ENCODE measurements at regions of chr1 and their contacts with region 1.

Region 1: GRCh38 chr1:220485131-220485530 is 42.8 kb upstream of the MARK1 start:
- DNase-seq: peak in 1 of 2 experiments; percentile 34
- H3K4me3 ChIP-seq: no peak overlapping the region
- H3K4me3 Mint-ChIP-seq: no peak overlapping the region
- H3K27ac Mint-ChIP-seq: no peak overlapping the region
- H3K4me1 ChIP-seq: peaks cover 5% of the 10 kb centered on the region; the same call in 1 of the 2 replicates
- H3K4me1 Mint-ChIP-seq: peaks cover 21% of the 10 kb centered on the region
- H3K27me3 ChIP-seq: no peaks in the 10 kb centered on the region
- H3K27me3 Mint-ChIP-seq: peaks cover 5% of the 10 kb centered on the region
- CTCF ChIP-seq: peak; percentile 11 to 60

Region 2: DNA sequence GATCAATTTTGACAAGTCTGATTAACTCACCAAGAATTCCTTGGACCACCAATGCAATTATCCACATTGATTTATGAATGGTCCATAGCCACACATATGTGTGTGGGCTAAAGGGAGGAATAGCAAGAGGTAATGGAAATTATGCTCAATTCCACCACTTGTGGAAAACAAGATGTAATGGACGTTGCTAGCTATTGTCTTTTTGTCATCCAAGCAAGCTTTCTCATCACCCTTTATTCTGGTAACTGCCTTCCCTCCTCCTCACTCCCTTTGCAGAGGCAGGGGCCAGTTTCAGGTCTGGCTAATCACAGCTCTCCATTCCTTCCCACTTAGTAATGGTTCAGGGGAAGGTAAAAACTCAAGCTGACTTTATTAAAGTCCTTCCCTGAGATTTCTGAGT is 188.2 kb before region 1 on chr1:
- CTCF ChIA-PET with region 1: interaction called, 11 read pairs
- POLR2A ChIA-PET with region 1: no interaction called
- intact Hi-C with region 1: loop called (anchors 1 kb)
- DNase-seq: no peak
- H3K4me3 ChIP-seq: no peak overlapping the region
- H3K4me3 Mint-ChIP-seq: no peak overlapping the region
- H3K27ac Mint-ChIP-seq: no peak overlapping the region
- H3K4me1 ChIP-seq: peaks cover 4% of the 10 kb centered on the region; the same call in 1 of the 2 replicates
- H3K4me1 Mint-ChIP-seq: peaks cover 5% of the 10 kb centered on the region
- H3K27me3 ChIP-seq: no peaks in the 10 kb centered on the region
- H3K27me3 Mint-ChIP-seq: peaks cover 4% of the 10 kb centered on the region
- CTCF ChIP-seq: no peak

Region 3: GRCh38 chr1:220339581-220339980 is 145.6 kb before region 1 on chr1:
- CTCF ChIA-PET with region 1: no interaction called
- POLR2A ChIA-PET with region 1: no interaction called
- intact Hi-C with region 1: loop called (anchors 1 kb)
- DNase-seq: no peak
- H3K4me3 ChIP-seq: no peak overlapping the region
- H3K4me3 Mint-ChIP-seq: no peak overlapping the region
- H3K27ac Mint-ChIP-seq: no peak overlapping the region
- H3K4me1 ChIP-seq: 0 out of 2 replicates have a peak, but pooled peaks cover 8% of the 10 kb centered on the region
- H3K4me1 Mint-ChIP-seq: no peaks in the 10 kb centered on the region
- H3K27me3 ChIP-seq: no peaks in the 10 kb centered on the region; the same call in 1 of the 2 replicates
- H3K27me3 Mint-ChIP-seq: peaks cover 4% of the 10 kb centered on the region
- CTCF ChIP-seq: no peak

Region 4: GRCh38 chr1:220370031-220370700 is 115.0 kb before region 1 on chr1:
- CTCF ChIA-PET with region 1: no interaction called
- POLR2A ChIA-PET with region 1: no interaction called
- intact Hi-C with region 1: loop called (anchors 1 kb)
- DNase-seq: no peak
- H3K4me3 ChIP-seq: no peak overlapping the region
- H3K4me3 Mint-ChIP-seq: no peak overlapping the region
- H3K27ac Mint-ChIP-seq: no peak overlapping the region
- H3K4me1 ChIP-seq: peaks cover 12% of the 10 kb centered on the region
- H3K4me1 Mint-ChIP-seq: peaks cover 13% of the 10 kb centered on the region
- H3K27me3 ChIP-seq: no peaks in the 10 kb centered on the region
- H3K27me3 Mint-ChIP-seq: peaks cover 11% of the 10 kb centered on the region
- CTCF ChIP-seq: no peak

Region 5: DNA sequence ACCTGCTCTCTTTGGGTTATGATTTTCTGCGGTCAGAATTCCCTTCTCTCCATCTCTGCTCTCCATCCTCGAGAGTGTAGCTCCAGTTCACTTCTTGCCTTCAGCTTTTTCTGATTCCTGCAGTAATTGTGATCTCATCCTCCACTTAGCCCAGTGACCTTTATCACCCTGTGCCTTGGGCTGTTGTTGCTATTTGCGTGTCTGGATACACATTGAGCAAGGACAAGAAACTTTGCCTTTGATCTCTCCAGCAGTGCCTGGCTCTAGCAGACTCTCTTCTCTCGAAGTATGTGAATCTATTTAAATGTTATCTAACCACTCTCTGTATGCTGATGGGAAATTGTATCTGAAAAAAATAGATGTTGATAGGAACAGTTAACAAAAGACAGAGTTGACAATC is 33.6 kb before region 1 on chr1:
- CTCF ChIA-PET with region 1: no interaction called
- POLR2A ChIA-PET with region 1: no interaction called
- intact Hi-C with region 1: loop called (anchors 1 kb)
- DNase-seq: peak; percentile 79 to 80
- H3K4me3 ChIP-seq: no peak overlapping the region
- H3K4me3 Mint-ChIP-seq: peak overlapping the region; percentile 14
- H3K27ac Mint-ChIP-seq: peak overlapping the region; percentile 20
- H3K4me1 ChIP-seq: peaks cover 32% of the 10 kb centered on the region
- H3K4me1 Mint-ChIP-seq: peaks cover 14% of the 10 kb centered on the region
- H3K27me3 ChIP-seq: no peaks in the 10 kb centered on the region
- H3K27me3 Mint-ChIP-seq: no peaks in the 10 kb centered on the region
- CTCF ChIP-seq: no peak

Region 6: DNA sequence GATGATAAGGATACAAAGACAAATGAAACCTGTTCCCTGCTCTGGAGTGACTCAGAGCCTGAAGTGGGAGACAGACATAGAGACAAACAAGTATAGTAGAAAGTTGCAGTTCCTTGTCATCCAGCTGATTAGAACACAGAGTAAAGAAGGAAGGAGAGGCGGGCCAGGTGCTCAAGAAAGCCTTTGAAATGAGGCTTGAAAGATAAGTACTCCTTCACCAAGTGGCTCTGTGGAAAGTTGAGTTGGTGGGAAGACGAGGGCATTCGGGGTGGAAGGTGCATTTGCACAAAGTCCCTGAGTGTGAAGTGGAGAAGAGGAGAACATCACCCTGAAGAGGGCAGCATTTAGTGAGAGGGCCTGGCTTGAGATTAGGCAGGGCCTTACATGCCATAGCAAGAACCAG is 59.8 kb after region 1 on chr1:
- CTCF ChIA-PET with region 1: no interaction called
- POLR2A ChIA-PET with region 1: no interaction called
- intact Hi-C with region 1: no loop called
- DNase-seq: peak in 1 of 2 experiments; percentile 20
- H3K4me3 ChIP-seq: no peak overlapping the region
- H3K4me3 Mint-ChIP-seq: no peak overlapping the region
- H3K27ac Mint-ChIP-seq: no peak overlapping the region
- H3K4me1 ChIP-seq: no peaks in the 10 kb centered on the region
- H3K4me1 Mint-ChIP-seq: no peaks in the 10 kb centered on the region
- H3K27me3 ChIP-seq: no peaks in the 10 kb centered on the region
- H3K27me3 Mint-ChIP-seq: peaks cover 9% of the 10 kb centered on the region
- CTCF ChIP-seq: peak in 1 of 2 experiments; percentile 37